ENCODE measurements at regions of chr1 and their contacts with region 1.

Region 1: GRCh38 chr1:167220537-167221125 is at the start of gene POU2F1:
- DNase-seq: peak; percentile 97 to 100 (median 99)
- ATAC-seq: peak; percentile 78
- H3K4me3 ChIP-seq: peak within 1 kb of the TSS; percentile 89 to 96
- H3K4me3 Mint-ChIP-seq: peak within 1 kb of the TSS; percentile 97
- H3K27ac ChIP-seq: peak within 1 kb of the TSS; percentile 80 to 91
- H3K27ac Mint-ChIP-seq: peak within 1 kb of the TSS; percentile 96
- H3K4me1 ChIP-seq: peaks cover 23% of the 10 kb centered on the region
- H3K4me1 Mint-ChIP-seq: peaks cover 40% of the 10 kb centered on the region
- H3K27me3 ChIP-seq: no peaks in the 10 kb centered on the region
- H3K27me3 Mint-ChIP-seq: no peaks in the 10 kb centered on the region
- CTCF ChIP-seq: peak; percentile 45
- total RNA-seq, gene POU2F1: 18.5 to 23.9 TPM

Region 2: DNA sequence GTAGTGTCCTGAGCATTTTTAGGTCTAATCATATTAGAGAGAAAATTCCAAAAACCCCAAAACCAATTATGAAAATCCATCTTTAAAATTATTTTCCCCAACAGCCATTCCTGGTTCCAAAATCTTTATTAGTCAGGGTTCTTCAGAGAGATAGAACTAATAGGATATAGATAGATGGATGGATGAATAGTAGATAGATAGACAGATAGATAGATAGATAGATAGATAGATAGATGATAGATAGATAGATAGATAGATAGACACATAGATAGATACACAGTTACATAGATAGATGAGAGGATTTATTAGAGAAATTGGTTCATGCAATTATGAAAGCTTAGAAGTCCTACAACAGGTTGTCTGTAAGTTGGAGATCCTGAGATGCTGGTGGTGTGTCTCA is 504.0 kb before region 1 on chr1:
- CTCF ChIA-PET with region 1: no interaction called
- POLR2A ChIA-PET with region 1: no interaction called
- intact Hi-C with region 1: no loop called
- DNase-seq: no peak
- ATAC-seq: no peak
- H3K4me3 ChIP-seq: no peak overlapping the region
- H3K4me3 Mint-ChIP-seq: no peak overlapping the region
- H3K27ac ChIP-seq: no peak overlapping the region
- H3K27ac Mint-ChIP-seq: no peak overlapping the region
- H3K4me1 ChIP-seq: no peaks in the 10 kb centered on the region
- H3K4me1 Mint-ChIP-seq: no peaks in the 10 kb centered on the region
- H3K27me3 ChIP-seq: no peaks in the 10 kb centered on the region
- H3K27me3 Mint-ChIP-seq: peaks cover 6% of the 10 kb centered on the region
- CTCF ChIP-seq: no peak

Region 3: DNA sequence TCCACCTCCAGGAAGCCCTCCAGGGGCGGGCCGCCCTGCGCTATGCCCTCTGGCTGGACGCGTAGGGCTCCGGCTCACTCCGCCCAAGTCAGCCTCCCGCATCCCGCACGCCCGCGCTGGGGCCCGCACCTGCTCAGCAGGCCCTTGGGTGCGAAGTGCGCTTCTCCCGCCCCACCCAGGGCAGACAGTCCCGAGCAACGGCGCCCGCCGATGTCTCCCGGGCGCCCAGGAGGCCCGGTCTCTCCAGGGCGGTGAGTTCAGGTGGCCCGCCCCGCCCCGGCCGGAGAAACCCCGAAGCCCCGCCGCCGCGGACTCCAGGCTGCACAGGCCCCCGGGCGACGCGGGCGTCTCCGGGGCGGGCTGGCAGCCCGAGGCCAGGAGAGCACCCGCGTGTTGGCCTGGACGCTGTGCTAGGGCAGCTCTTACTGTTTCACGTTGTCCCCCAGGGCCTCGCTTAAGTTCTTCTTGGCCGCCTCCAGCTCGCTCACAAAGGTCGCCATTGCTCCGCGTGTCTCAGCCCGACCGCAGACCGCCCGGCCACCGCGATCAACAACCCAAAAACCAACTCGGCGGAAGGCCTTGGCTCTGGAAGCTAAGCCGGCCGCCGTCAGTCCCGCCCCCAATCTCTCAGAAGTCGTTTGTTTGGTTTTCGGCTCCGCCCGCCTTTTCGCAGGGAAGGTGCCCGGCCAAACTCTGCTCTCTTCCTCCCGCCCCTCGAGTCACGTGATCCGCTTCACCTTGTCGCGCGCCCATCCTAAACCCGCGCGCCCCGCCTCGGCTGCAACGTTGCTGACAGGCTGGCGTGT is 344.7 kb before region 1 on chr1 and contains the start of gene TADA1:
- CTCF ChIA-PET with region 1: no interaction called
- POLR2A ChIA-PET with region 1: interaction called, 4 read pairs
- intact Hi-C with region 1: loop called (anchors 1 to 2 kb)
- DNase-seq: peak; percentile 96 to 99 (median 98)
- ATAC-seq: peak; percentile 90
- H3K4me3 ChIP-seq: peak within 1 kb of the TSS; percentile 71 to 84
- H3K4me3 Mint-ChIP-seq: peak within 1 kb of the TSS; percentile 97
- H3K27ac ChIP-seq: peak within 1 kb of the TSS; percentile 74 to 79
- H3K27ac Mint-ChIP-seq: peak within 1 kb of the TSS; percentile 99
- H3K4me1 ChIP-seq: peaks cover 18% of the 10 kb centered on the region
- H3K4me1 Mint-ChIP-seq: peaks cover 49% of the 10 kb centered on the region
- H3K27me3 ChIP-seq: no peaks in the 10 kb centered on the region
- H3K27me3 Mint-ChIP-seq: no peaks in the 10 kb centered on the region
- CTCF ChIP-seq: no peak
- total RNA-seq, gene TADA1: 16.7 to 18.5 TPM

Region 4: DNA sequence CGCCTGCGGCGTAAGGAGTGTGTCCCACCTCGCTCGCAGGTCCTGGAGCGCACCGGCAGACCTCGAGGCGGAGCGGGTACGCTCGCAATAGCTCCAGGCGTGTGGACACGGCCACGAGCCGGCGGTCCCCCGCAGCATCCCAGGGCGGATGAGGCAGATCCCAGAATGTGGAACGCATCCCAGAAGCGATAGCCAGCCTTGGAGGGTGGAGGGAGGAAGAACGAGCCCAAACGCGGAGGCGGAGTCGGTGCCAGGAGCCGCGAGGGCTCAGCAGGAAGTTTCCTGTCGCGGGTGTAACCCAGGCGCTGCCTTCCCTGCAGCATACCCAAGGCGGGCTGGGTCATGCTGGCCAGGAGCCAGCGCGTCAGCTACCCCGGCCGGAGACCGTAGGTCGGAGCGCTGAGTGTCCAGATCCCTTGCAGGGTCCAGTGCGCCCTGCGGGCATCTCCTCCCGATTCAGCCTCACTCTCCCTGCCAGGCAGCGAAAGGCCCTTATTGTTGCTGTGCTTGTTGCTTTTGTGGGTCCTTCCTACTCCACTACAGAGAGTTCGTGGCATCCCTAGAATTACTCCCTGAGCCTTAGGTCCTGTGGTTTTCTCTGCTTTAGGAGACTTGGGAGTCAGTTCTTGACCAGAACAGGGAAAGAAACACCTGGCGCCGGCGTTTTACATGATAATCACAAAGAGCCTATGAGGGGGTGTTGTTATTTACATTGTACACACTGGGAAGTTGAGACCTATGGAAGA is 99.1 kb before region 1 on chr1:
- CTCF ChIA-PET with region 1: interaction called, 3 read pairs
- POLR2A ChIA-PET with region 1: interaction called, 3 read pairs
- intact Hi-C with region 1: loop called in 1 of 2 experiments (anchors 1 kb)
- DNase-seq: peak in 7 of 9 experiments; percentile 11 to 72 (median 40)
- ATAC-seq: peak; percentile 67
- H3K4me3 ChIP-seq: peak overlapping the region; percentile 56 to 72
- H3K4me3 Mint-ChIP-seq: peak overlapping the region; percentile 86
- H3K27ac ChIP-seq: no peak overlapping the region
- H3K27ac Mint-ChIP-seq: no peak overlapping the region
- H3K4me1 ChIP-seq: no peaks in the 10 kb centered on the region
- H3K4me1 Mint-ChIP-seq: peaks cover 6% of the 10 kb centered on the region
- H3K27me3 ChIP-seq: peaks cover 0 to 4% of the 10 kb centered on the region in 2 experiments
- H3K27me3 Mint-ChIP-seq: peaks cover 7% of the 10 kb centered on the region
- CTCF ChIP-seq: no peak

Region 5: DNA sequence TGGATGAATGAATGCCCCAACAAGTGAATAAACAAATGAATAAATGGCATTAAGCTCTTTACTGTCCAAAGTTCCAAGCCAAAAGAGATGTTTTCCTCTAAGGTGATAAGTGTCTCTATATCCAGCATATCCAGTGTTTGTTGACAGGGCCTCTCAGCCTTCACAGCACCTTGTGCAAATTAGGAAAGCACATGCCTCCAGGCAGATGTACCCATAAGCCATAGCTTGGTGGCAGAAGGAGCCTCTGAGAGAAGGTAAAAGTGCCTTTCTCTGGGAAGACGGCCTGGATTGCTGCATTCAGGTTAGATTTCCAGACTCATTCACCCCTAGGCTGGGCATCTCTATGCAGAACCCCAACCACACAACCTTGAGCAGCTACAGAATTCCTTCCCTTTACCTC is 28.1 kb before region 1 on chr1:
- CTCF ChIA-PET with region 1: no interaction called
- POLR2A ChIA-PET with region 1: no interaction called
- intact Hi-C with region 1: no loop called
- DNase-seq: no peak
- ATAC-seq: no peak
- H3K4me3 ChIP-seq: no peak overlapping the region
- H3K4me3 Mint-ChIP-seq: no peak overlapping the region
- H3K27ac ChIP-seq: no peak overlapping the region
- H3K27ac Mint-ChIP-seq: no peak overlapping the region
- H3K4me1 ChIP-seq: no peaks in the 10 kb centered on the region
- H3K4me1 Mint-ChIP-seq: no peaks in the 10 kb centered on the region
- H3K27me3 ChIP-seq: peaks cover 0 to 3% of the 10 kb centered on the region in 2 experiments
- H3K27me3 Mint-ChIP-seq: peaks cover 20% of the 10 kb centered on the region
- CTCF ChIP-seq: no peak

Region 6: GRCh38 chr1:167447521-167448136 is 227.0 kb after region 1 on chr1:
- CTCF ChIA-PET with region 1: interaction called, 3 read pairs
- POLR2A ChIA-PET with region 1: interaction called, 11 read pairs
- intact Hi-C with region 1: loop called in 1 of 2 experiments (anchors 5 kb)
- DNase-seq: peak in 8 of 9 experiments; percentile 31 to 89 (median 76)
- ATAC-seq: peak; percentile 82
- H3K4me3 ChIP-seq: peak overlapping the region; percentile 19 to 32
- H3K4me3 Mint-ChIP-seq: peak overlapping the region; percentile 68
- H3K27ac ChIP-seq: peak overlapping the region; percentile 82 to 89
- H3K27ac Mint-ChIP-seq: peak overlapping the region; percentile 97
- H3K4me1 ChIP-seq: peaks cover 73% of the 10 kb centered on the region
- H3K4me1 Mint-ChIP-seq: peaks cover 85% of the 10 kb centered on the region
- H3K27me3 ChIP-seq: no peaks in the 10 kb centered on the region
- H3K27me3 Mint-ChIP-seq: no peaks in the 10 kb centered on the region
- CTCF ChIP-seq: no peak

Region 7: GRCh38 chr1:167542109-167543032 is 321.7 kb after region 1 on chr1:
- CTCF ChIA-PET with region 1: no interaction called
- POLR2A ChIA-PET with region 1: no interaction called
- intact Hi-C with region 1: loop called in 1 of 2 experiments (anchors 5 kb)
- DNase-seq: no peak
- ATAC-seq: no peak
- H3K4me3 ChIP-seq: no peak overlapping the region
- H3K4me3 Mint-ChIP-seq: no peak overlapping the region
- H3K27ac ChIP-seq: no peak overlapping the region
- H3K27ac Mint-ChIP-seq: no peak overlapping the region
- H3K4me1 ChIP-seq: no peaks in the 10 kb centered on the region
- H3K4me1 Mint-ChIP-seq: peaks cover 10% of the 10 kb centered on the region
- H3K27me3 ChIP-seq: no peaks in the 10 kb centered on the region
- H3K27me3 Mint-ChIP-seq: no peaks in the 10 kb centered on the region
- CTCF ChIP-seq: no peak

Region 8: DNA sequence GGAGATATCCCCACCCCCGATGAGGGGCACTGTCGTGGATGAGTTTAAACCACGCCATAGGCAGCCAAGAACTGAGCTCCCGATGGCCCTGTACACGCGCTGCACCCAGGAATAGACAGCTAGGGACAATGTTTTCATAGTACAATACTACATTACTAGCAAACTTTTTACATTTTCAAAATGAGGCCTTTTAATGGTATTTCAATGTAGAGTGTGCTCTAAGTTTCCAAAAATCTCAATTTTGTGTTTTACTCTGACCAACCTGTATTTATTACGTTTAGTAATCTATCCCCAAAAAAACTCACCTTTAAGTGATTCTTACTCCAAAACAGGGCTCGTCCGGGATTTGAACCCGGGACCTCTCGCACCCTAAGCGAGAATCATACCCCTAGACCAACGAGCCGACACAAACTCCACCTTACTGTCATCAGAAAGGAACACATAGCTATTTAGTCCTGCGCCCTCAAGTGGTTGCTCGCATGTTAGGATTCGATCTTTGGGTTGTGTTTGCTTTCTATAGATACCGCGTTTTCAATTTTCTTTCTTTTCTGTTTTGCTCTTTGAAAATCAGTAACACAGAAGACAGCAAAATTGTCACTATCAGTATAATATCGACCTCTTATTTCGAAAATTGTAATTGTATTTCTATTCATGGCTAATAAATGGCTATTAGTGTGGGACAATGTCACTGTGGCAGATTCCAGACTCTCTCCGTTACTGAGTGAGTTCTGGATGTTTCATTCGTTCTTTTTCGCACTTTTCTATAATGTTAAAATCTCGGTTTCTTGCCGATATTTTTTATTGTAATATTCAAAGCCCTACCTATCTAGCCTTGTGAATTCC is 494.7 kb after region 1 on chr1:
- CTCF ChIA-PET with region 1: no interaction called
- POLR2A ChIA-PET with region 1: no interaction called
- intact Hi-C with region 1: loop called (anchors 2 kb)
- DNase-seq: peak; percentile 78 to 95 (median 85)
- ATAC-seq: peak; percentile 59
- H3K4me3 ChIP-seq: peak overlapping the region; percentile 59 to 90
- H3K4me3 Mint-ChIP-seq: peak overlapping the region; percentile 98
- H3K27ac ChIP-seq: peak overlapping the region; percentile 23 to 24
- H3K27ac Mint-ChIP-seq: peak overlapping the region; percentile 92
- H3K4me1 ChIP-seq: peaks cover 13% of the 10 kb centered on the region
- H3K4me1 Mint-ChIP-seq: peaks cover 31% of the 10 kb centered on the region
- H3K27me3 ChIP-seq: no peaks in the 10 kb centered on the region
- H3K27me3 Mint-ChIP-seq: no peaks in the 10 kb centered on the region
- CTCF ChIP-seq: peak; percentile 86

Measured in CD8-positive, alpha-beta T cell (primary cell).